ENCODE measurements at regions of chr1 and their contacts with region 1.

Region 1: DNA sequence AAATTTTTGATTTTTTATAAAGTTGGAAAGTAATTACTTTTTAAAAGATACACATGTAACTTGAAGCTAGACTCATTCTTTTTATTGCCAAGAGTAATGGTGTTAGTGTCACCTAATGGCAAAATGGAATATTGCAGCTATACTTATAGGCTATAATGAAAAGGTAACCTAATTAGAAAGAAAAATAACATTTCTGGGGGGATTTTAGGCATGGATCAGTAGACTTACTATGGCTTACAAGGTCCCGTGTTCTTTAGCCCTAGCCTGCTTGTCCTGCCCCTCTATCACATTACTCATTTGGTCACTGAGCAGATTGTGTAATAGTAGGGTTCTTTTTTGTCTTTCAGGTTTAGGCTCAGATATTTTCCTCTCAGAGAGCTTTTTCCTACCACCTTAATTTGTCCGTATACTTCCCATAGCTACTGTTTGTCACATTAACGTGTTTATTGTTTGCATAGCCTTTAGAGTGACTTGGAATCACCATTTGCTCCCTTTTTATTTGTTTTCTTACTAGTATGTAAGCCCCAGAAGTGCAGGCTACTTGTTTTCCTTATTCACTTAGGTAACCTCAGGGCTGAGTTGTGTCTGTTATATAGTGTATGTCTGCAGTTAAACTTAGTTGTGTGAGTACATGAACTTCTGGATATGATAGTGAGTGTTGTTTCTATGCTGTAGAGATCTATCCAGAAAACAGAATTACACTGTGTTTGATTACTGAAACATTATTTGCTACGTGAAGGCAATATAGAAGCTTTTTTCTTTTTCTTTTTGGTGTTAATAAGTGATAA is 58.7 kb downstream of the RABGAP1L start:
- DNase-seq: no peak
- CTCF ChIP-seq: peak; percentile 68

Region 2: DNA sequence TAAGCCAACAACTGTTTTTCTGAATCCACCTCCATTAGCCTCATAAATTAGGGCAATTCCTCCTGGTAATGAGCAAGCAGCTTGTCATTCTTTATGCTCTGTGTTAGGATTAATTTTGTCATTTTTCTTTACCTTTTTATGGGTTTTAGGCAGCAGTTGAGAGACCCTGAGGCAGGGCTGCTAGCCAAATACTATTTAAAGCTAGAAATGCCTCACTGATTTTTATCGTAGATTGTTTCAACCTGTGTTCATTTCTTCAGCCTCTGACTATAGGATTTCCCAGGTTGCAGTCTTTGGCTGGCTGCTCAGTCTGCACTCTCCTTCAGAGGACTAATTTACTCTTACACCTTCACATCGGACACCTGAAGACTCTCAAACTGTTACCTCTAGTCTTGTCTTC is 120.6 kb before region 1 on chr1:
- in situ Hi-C with region 1: loop called (anchors 10 kb)
- DNase-seq: no peak
- CTCF ChIP-seq: no peak